CD4-positive, alpha-beta T cell (primary cell): ENCODE measurements at regions of chr12 and their contacts with region 1.

Region 1: DNA sequence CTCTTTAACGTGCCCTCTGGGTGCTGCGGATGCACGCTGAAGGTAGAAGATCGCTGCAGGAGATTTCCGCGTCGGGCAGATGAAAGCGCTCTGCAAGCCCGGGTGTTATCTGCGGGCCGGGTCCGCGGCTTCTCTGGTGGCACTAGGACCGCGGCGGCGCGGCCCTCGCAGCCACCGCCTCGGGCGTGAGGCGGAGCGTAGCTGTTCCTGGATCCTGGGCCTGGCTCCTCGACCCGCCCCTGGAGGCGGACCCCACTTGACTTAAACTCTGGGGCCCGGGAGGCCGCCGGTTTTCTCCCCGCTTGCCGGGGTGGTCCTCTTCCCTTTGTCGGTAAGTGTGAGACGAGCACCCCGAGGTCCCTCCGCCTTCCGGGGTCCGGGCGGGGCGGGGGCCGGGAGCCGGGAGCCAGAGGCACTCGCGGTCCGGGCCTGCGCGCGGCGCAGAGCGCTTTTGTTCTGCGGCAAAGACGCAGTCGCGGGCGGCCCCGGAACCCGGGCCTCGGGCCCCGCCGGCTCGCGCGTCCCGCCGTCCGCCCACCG is at the start of gene RESF1:
- DNase-seq: peak; percentile 72 to 96 (median 85)
- ATAC-seq: peak; percentile 73
- H3K4me3 ChIP-seq: peak within 1 kb of the TSS; percentile 84
- H3K4me3 Mint-ChIP-seq: peak within 1 kb of the TSS; percentile 99
- H3K27ac ChIP-seq: peak within 1 kb of the TSS; percentile 69 to 82
- H3K27ac Mint-ChIP-seq: peak within 1 kb of the TSS; percentile 96
- H3K4me1 ChIP-seq: peaks cover 46% of the 10 kb centered on the region
- H3K4me1 Mint-ChIP-seq: peaks cover 78% of the 10 kb centered on the region
- H3K27me3 ChIP-seq: no peaks in the 10 kb centered on the region
- H3K27me3 Mint-ChIP-seq: no peaks in the 10 kb centered on the region
- CTCF ChIP-seq: no peak
- total RNA-seq, gene RESF1: 113 to 124 TPM

Region 2: GRCh38 chr12:31682136-31682962 is 276.9 kb before region 1 on chr12:
- CTCF ChIA-PET with region 1: interaction called, 3 read pairs
- POLR2A ChIA-PET with region 1: interaction called, 10 read pairs
- intact Hi-C with region 1: loop called (anchors 2 to 5 kb)
- DNase-seq: peak; percentile 42 to 89 (median 58)
- ATAC-seq: peak; percentile 92
- H3K4me3 ChIP-seq: no peak overlapping the region
- H3K4me3 Mint-ChIP-seq: peak overlapping the region; percentile 22
- H3K27ac ChIP-seq: no peak overlapping the region
- H3K27ac Mint-ChIP-seq: peak overlapping the region; percentile 31
- H3K4me1 ChIP-seq: no peaks in the 10 kb centered on the region
- H3K4me1 Mint-ChIP-seq: peaks cover 11% of the 10 kb centered on the region
- H3K27me3 ChIP-seq: no peaks in the 10 kb centered on the region
- H3K27me3 Mint-ChIP-seq: no peaks in the 10 kb centered on the region
- CTCF ChIP-seq: peak; percentile 78

Region 3: GRCh38 chr12:31874961-31875608 is 84.1 kb before region 1 on chr12:
- CTCF ChIA-PET with region 1: interaction called, 3 read pairs
- POLR2A ChIA-PET with region 1: interaction called, 7 read pairs
- intact Hi-C with region 1: loop called in 1 of 2 experiments (anchors 5 kb)
- DNase-seq: peak; percentile 51 to 94 (median 68)
- ATAC-seq: peak; percentile 95
- H3K4me3 ChIP-seq: no peak overlapping the region
- H3K4me3 Mint-ChIP-seq: peak overlapping the region; percentile 82
- H3K27ac ChIP-seq: peak overlapping the region; percentile 78 to 92
- H3K27ac Mint-ChIP-seq: peak overlapping the region; percentile 99
- H3K4me1 ChIP-seq: peaks cover 25% of the 10 kb centered on the region
- H3K4me1 Mint-ChIP-seq: peaks cover 60% of the 10 kb centered on the region
- H3K27me3 ChIP-seq: no peaks in the 10 kb centered on the region
- H3K27me3 Mint-ChIP-seq: no peaks in the 10 kb centered on the region
- CTCF ChIP-seq: no peak

Region 4: DNA sequence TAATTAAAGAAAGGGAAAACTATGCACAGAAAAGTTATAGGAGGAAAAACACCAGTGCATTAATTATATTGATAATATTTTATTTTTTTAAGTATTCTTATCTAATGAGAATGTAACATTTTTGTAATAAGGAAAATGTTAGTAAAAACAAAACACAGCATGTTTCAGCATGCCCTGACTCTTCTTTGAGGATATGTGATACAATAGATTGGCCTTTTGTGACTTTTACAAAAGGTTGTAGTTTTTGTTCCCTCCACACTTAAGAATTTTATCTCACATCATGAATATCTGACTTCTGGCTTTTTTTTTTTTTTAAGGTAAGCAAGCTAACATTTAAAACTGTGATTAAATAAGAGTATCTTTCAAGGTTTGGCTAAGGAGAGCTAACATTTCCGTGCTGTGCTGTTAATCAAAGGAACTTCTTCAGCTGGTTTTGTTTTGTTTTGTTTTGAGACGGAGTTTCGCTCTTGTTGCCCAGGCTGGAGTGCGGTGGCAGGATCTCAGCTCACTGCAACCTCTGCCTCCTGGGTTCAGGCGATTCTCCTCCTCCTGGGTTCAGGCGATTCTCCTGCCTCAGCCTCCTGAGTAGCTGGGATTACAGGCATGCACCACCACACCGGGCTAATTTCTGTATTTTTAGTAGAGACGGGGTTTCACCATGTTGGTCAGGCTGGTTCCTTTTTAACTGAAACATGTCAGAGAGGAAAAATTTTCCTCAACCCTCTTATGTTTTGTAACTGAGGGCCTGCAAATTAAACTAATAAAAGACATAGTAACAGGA is 30.8 kb before region 1 on chr12:
- CTCF ChIA-PET with region 1: no interaction called
- POLR2A ChIA-PET with region 1: interaction called, 23 read pairs
- intact Hi-C with region 1: loop called (anchors 2 to 5 kb)
- DNase-seq: peak in 12 of 14 experiments; percentile 6 to 67 (median 22)
- ATAC-seq: peak; percentile 79
- H3K4me3 ChIP-seq: peak overlapping the region; percentile 39
- H3K4me3 Mint-ChIP-seq: peak overlapping the region; percentile 85
- H3K27ac ChIP-seq: peak overlapping the region; percentile 51 to 62
- H3K27ac Mint-ChIP-seq: peak overlapping the region; percentile 95
- H3K4me1 ChIP-seq: peaks cover 45% of the 10 kb centered on the region
- H3K4me1 Mint-ChIP-seq: peaks cover 51% of the 10 kb centered on the region
- H3K27me3 ChIP-seq: no peaks in the 10 kb centered on the region
- H3K27me3 Mint-ChIP-seq: no peaks in the 10 kb centered on the region
- CTCF ChIP-seq: no peak

Region 5: DNA sequence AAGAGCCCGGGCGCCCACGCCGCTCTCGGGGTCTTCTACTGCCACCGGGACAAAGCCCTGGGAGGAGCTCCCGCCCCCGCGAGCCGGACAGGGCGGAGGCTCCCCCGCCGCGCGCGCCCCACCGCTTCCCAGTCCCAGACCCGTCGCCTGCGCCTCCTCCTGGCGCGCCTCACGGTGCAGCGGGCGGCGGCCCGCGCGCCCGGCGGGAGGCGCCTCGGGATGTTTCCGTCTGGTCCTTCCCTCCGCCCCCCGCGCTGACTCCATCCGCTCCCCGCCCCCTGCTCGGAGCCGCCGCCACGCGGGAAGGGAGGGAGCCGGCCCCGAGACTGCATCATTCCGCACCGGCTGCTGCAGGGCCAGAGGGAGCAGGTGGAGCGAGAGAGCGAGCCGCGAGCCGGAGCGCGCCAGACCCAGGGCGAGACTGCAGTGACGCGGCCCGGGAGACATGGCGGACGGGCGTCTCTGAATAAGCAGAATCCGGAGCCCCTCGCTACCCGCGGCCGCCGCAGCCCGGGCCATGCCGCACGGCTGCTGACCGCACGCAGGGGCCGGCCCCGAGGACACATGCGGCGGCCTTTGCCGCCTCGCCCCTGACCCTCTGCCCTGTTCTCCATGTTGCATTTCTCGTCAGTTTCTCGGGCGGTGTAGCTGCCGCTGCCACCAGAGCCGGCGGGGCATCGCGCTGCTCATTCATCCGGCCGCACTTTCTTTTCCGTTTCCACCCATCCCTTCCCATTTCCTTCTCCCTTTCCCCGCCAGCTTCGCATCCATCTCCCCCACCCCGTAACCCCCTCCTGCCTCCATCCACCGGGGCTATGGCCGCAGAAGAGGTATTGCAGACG is 147.5 kb after region 1 on chr12 and contains the start of gene BICD1:
- CTCF ChIA-PET with region 1: no interaction called
- POLR2A ChIA-PET with region 1: interaction called, 5 read pairs
- intact Hi-C with region 1: loop called in 1 of 2 experiments (anchors 5 kb)
- DNase-seq: peak; percentile 39 to 89 (median 66)
- ATAC-seq: peak; percentile 82
- H3K4me3 ChIP-seq: peak within 1 kb of the TSS; percentile 86
- H3K4me3 Mint-ChIP-seq: peak within 1 kb of the TSS; percentile 97
- H3K27ac ChIP-seq: peak within 1 kb of the TSS in 1 of 2 donors; percentile 9
- H3K27ac Mint-ChIP-seq: peak within 1 kb of the TSS; percentile 73
- H3K4me1 ChIP-seq: peaks cover 15% of the 10 kb centered on the region
- H3K4me1 Mint-ChIP-seq: peaks cover 35% of the 10 kb centered on the region
- H3K27me3 ChIP-seq: no peaks in the 10 kb centered on the region
- H3K27me3 Mint-ChIP-seq: no peaks in the 10 kb centered on the region
- CTCF ChIP-seq: peak; percentile 24
- total RNA-seq, gene BICD1: 13.5 to 14.3 TPM

Region 6: DNA sequence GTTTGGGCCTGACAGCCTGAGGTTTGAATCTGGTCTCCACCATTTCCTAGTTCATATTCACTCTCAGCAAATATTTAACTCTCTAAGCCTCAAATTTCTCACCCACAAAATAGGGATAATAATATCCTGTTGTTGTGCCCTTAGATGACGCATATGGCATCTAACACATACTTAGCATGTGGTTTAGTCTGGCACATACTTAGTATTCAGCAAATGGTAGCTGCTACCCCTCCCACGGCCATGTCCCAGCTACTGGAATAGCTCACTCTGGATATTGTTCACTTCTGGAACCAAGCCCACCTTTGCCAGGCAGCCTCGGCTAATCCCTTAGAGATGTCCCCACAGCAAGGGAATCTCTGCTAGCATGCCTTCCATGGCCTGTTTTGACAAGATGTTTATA is 200.7 kb after region 1 on chr12:
- CTCF ChIA-PET with region 1: no interaction called
- POLR2A ChIA-PET with region 1: no interaction called
- intact Hi-C with region 1: no loop called
- DNase-seq: peak in 1 of 14 experiments; percentile 23
- ATAC-seq: no peak
- H3K4me3 ChIP-seq: no peak overlapping the region
- H3K4me3 Mint-ChIP-seq: no peak overlapping the region
- H3K27ac ChIP-seq: no peak overlapping the region
- H3K27ac Mint-ChIP-seq: no peak overlapping the region
- H3K4me1 ChIP-seq: no peaks in the 10 kb centered on the region
- H3K4me1 Mint-ChIP-seq: no peaks in the 10 kb centered on the region
- H3K27me3 ChIP-seq: no peaks in the 10 kb centered on the region
- H3K27me3 Mint-ChIP-seq: no peaks in the 10 kb centered on the region
- CTCF ChIP-seq: no peak

Region 7: DNA sequence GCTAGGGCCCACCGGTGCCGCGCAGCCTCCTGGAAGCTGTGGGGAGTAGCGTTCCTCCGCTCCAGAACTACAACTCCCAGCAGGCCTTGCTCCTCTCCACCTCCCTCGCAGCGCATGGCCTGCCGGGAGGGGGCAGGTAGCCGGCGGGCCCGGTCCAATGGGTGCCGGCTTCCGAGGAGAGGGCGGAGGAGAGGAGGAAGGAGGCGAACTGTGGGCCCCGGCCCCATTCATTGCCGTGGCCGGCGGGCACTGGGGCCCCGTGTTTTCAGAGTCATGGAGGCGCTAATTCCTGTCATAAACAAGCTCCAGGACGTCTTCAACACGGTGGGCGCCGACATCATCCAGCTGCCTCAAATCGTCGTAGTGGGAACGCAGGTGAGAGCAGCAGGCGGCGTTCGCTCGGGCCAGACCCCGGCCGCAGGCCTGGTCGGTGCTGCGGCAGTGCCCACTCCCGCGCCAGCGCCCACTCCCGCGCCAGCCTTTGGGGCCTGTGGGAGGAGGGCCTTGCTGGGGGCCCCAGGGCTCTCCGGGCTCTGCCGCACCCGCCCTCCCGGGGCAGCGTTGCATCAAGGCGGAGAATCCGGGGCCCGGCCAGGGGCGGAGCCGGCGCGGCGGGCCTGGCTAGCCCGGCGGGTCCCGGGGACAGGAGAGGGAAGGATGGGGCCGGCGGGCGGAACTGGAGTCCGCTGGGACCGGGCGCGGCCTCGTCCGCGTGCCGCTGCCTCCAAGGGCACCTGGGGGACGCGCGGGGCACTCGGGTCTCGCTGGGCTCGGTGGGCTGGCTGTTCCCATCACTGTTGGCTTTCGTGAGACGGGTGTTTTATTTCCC is 720.1 kb after region 1 on chr12 and contains the start of gene DNM1L:
- CTCF ChIA-PET with region 1: no interaction called
- POLR2A ChIA-PET with region 1: no interaction called
- intact Hi-C with region 1: loop called in 1 of 2 experiments (anchors 10 kb)
- DNase-seq: peak; percentile 84 to 96 (median 90)
- ATAC-seq: peak; percentile 98
- H3K4me3 ChIP-seq: peak within 1 kb of the TSS; percentile 79
- H3K4me3 Mint-ChIP-seq: peak within 1 kb of the TSS; percentile 94
- H3K27ac ChIP-seq: peak within 1 kb of the TSS; percentile 67 to 73
- H3K27ac Mint-ChIP-seq: peak within 1 kb of the TSS; percentile 84
- H3K4me1 ChIP-seq: peaks cover 11% of the 10 kb centered on the region
- H3K4me1 Mint-ChIP-seq: peaks cover 36% of the 10 kb centered on the region
- H3K27me3 ChIP-seq: no peaks in the 10 kb centered on the region
- H3K27me3 Mint-ChIP-seq: no peaks in the 10 kb centered on the region
- CTCF ChIP-seq: no peak
- total RNA-seq, gene DNM1L: 70.9 to 74.6 TPM